Heart left ventricle (tissue), 16 donors: ENCODE measurements at regions of chr3 and their contacts with region 1.

Region 1: DNA sequence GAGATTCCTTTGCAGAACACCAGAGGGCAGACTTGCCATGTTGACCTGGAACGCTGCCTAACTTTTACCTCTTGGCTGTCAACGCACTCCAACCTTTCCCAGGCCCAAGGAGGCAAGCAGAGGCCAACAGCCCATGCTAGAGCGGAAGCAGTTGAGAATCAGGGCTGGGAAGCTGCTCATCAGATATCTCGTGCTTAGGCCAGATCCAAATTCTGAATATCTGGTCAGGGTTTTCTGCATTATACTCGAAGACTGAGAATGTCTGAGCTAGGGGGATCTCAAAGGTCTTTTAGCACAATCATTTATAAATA is 2.5 kb downstream of the XIRP1 start:
- DNase-seq: peak in 4 of 5 donors; percentile 69 to 80 (median 78)
- ATAC-seq: peak; percentile 15 to 40 (median 30)
- H3K4me3 ChIP-seq: peak overlapping the region; percentile 9 to 72 (median 61)
- H3K27ac ChIP-seq: peak overlapping the region; percentile 41 to 99 (median 92)
- H3K4me1 ChIP-seq: peaks cover 0 to 71% (median 28%) of the 10 kb centered on the region in 12 donors
- H3K27me3 ChIP-seq: no peaks in the 10 kb centered on the region
- CTCF ChIP-seq: peak; percentile 64 to 82 (median 78)
- POLR2A ChIP-seq: no peak

Region 2: GRCh38 chr3:39126532-39127071 is 63.3 kb before region 1 on chr3:
- intact Hi-C with region 1: loop called in 6 of 10 experiments (anchors 2 to 10 kb)
- DNase-seq: peak in 2 of 5 donors; percentile 45 to 69
- ATAC-seq: peak; percentile 62 to 85 (median 79)
- H3K4me3 ChIP-seq: no peak overlapping the region
- H3K27ac ChIP-seq: no peak overlapping the region
- H3K4me1 ChIP-seq: peaks cover 0 to 17% (median 3%) of the 10 kb centered on the region in 12 donors
- H3K27me3 ChIP-seq: no peaks in the 10 kb centered on the region
- CTCF ChIP-seq: peak; percentile 45 to 77 (median 62)
- POLR2A ChIP-seq: no peak